A673 (cell line): ENCODE measurements at regions of chr5 and their contacts with region 1.

Region 1: DNA sequence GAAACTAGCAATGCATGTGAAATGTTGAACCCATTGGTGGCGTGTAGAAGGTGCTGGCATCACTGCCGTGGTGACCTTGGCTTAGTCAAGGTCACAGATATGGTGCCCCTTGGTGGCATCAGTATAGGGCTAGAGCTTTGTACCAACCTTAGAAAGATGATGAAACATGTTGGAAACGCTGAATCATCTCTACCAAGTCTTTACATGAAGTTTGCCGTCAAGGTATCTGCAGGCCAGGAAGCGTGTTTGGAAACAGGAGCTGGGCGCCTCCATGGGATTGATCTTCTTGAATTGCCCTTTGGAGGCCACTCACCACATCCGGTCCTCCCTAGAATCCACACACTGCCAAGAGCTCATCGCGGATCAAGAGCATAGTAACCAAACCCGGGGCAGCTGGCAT is 16.9 kb upstream of the BOD1 start:
- DNase-seq: no peak
- H3K4me3 ChIP-seq: no peak overlapping the region
- H3K27ac ChIP-seq: no peak overlapping the region
- H3K4me1 ChIP-seq: no peaks in the 10 kb centered on the region
- H3K27me3 ChIP-seq: no peaks in the 10 kb centered on the region
- CTCF ChIP-seq: no peak

Region 2: DNA sequence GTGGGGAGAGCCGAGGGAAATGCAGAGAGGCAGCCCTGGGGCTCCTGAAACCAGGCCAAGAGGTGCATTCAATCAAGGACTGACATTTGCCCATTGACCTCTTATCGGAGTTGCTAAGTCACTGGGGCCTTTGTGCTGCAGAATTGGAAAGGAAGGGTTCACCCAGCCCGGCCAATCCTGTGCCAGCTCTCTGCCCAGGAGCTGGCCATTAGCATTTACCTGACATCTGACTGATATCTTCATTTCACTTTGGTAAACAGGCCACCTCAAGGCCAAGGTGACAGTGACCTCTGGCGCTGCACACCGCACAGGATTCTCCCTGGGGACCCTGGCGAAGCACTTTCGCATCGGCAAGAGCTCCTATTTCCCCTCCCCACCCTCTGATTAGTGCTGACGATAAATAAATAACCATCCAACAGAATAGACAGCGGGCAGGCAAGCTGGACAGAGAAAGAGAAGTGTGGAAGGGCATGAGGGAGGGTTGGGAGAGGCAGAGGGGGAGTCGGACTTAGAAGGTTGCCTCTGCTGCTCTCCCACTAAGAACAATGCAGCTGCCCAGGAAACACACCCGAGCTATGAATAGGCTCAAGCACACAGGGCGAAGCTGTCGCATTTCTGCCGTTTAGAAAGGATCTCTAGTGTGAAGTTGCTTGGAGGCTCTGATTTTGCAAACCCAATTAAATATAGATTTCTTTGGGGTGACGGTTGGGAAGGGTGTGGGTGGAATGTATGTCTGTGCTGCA is 40.2 kb after region 1 on chr5:
- CTCF ChIA-PET with region 1: no interaction called
- POLR2A ChIA-PET with region 1: no interaction called
- intact Hi-C with region 1: loop called (anchors 2 kb)
- DNase-seq: no peak
- H3K4me3 ChIP-seq: no peak overlapping the region
- H3K27ac ChIP-seq: no peak overlapping the region
- H3K4me1 ChIP-seq: no peaks in the 10 kb centered on the region
- H3K27me3 ChIP-seq: peaks cover 9% of the 10 kb centered on the region
- CTCF ChIP-seq: no peak